ENCODE measurements at regions of chr1 and their contacts with region 1.

Region 1: DNA sequence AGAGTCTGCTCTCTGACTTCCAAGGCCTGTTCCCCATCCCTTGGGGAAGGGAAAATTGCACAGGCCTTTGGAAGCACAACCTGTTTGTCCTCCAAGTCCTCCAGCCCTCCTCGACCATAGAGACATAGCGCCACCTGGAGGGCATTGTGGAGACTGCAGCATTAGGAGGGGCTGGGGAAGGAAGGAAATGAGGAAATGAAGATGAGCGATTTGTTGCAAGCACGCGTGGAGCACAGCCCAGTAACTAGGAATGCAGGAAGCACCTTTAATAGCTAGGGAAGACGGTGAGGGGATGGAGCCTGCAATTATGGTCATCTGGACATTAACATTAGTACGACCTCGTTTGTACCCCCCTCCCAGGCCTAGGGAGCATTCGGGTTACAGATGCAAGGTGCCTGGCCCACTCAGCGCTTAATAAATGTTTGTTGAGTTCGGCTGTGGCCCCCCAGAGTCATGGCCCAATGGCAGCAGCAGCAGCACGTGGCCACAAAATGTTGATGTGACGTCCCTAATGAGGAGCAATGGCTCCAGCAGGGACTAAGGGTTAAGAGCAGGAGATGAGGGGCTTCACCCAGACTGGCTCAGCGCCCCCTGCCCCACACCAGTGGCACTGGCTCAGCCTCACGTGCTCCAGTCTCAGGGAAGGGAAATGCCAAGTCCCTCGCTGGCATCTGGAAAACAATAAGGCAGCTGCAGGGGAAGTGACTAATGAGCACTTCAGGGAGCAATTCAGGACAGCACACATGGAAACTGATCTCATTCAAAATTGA is 8.0 kb upstream of the CAMK2N1 start:
- DNase-seq: peak; percentile 77 to 91 (median 88)
- H3K4me3 ChIP-seq: no peak overlapping the region
- H3K27ac ChIP-seq: no peak overlapping the region
- H3K4me1 ChIP-seq: no peaks in the 10 kb centered on the region
- H3K27me3 ChIP-seq: no peaks in the 10 kb centered on the region
- CTCF ChIP-seq: peak; percentile 88 to 98 (median 97)
- EP300 ChIP-seq: no peak
- POLR2A ChIP-seq: no peak

Region 2: GRCh38 chr1:19918057-19918456 is 576.0 kb before region 1 on chr1:
- intact Hi-C with region 1: loop called (anchors 5 to 10 kb)
- DNase-seq: peak; percentile 84 to 95 (median 91)
- H3K4me3 ChIP-seq: no peak overlapping the region
- H3K27ac ChIP-seq: no peak overlapping the region
- H3K4me1 ChIP-seq: no peaks in the 10 kb centered on the region
- H3K27me3 ChIP-seq: no peaks in the 10 kb centered on the region
- CTCF ChIP-seq: peak; percentile 86 to 96 (median 95)
- EP300 ChIP-seq: no peak
- POLR2A ChIP-seq: no peak

Region 3: DNA sequence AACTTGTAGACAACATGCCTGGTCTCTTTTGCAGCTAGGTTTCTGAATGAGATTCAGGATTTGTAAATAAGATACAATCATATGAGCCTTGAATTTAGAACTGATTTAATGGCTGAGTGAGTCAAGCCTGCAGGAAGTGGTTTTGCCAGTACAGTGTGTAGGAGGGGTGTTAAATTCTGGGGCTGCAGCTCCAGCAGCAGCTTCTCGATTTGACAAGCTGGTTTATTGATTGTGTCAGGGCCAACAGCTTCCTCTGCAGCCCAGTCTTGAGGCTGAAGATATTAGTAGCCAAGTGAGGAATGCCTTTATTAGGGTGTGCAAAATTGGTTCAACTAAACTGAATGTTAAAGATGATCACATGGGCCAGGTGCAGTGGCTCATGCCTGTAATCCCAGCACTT is 435.5 kb before region 1 on chr1:
- intact Hi-C with region 1: no loop called
- DNase-seq: no peak
- H3K4me3 ChIP-seq: no peak overlapping the region
- H3K27ac ChIP-seq: no peak overlapping the region
- H3K4me1 ChIP-seq: peaks cover 7% of the 10 kb centered on the region
- H3K27me3 ChIP-seq: no peaks in the 10 kb centered on the region
- CTCF ChIP-seq: no peak
- EP300 ChIP-seq: no peak
- POLR2A ChIP-seq: no peak

Region 4: DNA sequence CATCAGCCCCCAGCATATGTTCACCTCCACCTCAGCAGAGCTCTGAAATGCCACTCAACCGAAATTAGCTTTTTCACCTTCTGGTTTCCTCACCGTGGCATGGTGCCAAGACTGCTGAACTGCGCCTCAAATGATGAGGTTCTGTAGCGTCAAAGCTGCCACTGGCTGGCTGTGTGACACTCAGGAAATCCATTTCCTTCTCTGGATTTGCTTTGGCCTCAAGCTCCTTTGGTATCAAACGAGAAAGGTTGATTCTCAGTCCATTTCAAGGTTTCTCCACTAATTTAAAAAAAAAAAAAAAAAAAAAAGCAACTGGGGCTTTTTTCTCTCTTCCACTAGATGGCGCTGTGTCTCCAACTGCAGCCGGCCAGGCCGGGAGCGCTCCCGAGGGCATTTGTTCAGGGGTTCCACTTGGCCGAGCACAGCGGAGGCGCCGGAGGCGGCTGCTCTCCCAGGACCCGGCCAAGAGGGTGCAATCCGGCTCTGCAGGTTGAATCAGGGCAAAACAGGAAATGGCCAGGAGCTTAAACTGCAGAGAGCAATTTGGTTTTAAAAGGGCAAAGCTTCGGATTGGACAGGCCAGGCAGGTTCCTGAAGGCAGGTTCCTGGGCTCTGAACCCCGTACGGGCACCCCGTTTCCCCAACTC is 281.2 kb before region 1 on chr1:
- intact Hi-C with region 1: loop called in 3 of 4 experiments (anchors 5 to 10 kb)
- DNase-seq: peak; percentile 57 to 76 (median 64)
- H3K4me3 ChIP-seq: no peak overlapping the region
- H3K27ac ChIP-seq: no peak overlapping the region
- H3K4me1 ChIP-seq: peaks cover 12% of the 10 kb centered on the region
- H3K27me3 ChIP-seq: no peaks in the 10 kb centered on the region
- CTCF ChIP-seq: peak; percentile 26 to 51 (median 31)
- EP300 ChIP-seq: no peak
- POLR2A ChIP-seq: no peak

Region 5: DNA sequence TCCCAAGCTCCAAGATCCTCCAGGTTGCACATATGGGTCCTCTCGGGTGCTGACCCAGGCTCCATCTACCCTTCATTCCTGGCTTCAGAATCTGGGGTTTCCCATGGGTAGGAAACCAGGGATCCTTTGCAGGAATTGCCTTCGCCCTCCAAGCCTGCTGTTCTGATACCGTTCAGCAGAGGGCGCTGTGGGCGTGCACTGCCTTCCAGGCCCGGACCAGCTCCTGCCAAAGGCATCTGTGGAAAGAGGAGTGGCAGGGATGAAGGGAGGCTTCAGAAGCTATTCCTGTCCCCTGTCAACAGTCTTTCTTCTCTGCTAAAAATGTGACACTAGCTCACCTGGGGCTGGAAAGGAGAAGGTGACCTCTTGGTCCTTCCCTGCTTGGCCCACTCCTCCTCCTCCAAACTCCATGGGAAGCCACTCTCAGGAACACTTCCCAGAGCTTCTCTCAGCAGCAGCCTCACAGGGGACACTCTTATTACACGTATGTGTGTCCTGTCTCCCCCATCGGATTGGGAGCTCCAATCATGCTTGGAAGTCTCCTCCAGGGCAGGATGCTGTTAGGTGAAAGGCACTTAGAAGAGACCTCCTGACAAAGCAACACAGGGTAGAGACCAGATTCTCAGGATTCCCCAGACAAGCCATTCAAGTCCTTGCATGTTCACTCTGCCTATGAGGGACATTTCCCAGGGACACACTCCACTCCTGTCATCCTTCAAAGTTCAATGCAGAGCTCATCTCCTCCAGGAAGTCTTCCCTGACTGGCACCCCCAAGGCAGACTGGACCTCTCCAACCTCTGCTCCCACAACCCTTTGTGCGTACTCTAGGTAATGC is 132.0 kb before region 1 on chr1:
- intact Hi-C with region 1: loop called in 3 of 4 experiments (anchors 5 kb)
- DNase-seq: peak; percentile 43 to 75 (median 69)
- H3K4me3 ChIP-seq: no peak overlapping the region
- H3K27ac ChIP-seq: no peak overlapping the region
- H3K4me1 ChIP-seq: peaks cover 7% of the 10 kb centered on the region
- H3K27me3 ChIP-seq: no peaks in the 10 kb centered on the region
- CTCF ChIP-seq: peak in 2 of 3 donors; percentile 57 to 62
- EP300 ChIP-seq: no peak
- POLR2A ChIP-seq: no peak

Region 6: DNA sequence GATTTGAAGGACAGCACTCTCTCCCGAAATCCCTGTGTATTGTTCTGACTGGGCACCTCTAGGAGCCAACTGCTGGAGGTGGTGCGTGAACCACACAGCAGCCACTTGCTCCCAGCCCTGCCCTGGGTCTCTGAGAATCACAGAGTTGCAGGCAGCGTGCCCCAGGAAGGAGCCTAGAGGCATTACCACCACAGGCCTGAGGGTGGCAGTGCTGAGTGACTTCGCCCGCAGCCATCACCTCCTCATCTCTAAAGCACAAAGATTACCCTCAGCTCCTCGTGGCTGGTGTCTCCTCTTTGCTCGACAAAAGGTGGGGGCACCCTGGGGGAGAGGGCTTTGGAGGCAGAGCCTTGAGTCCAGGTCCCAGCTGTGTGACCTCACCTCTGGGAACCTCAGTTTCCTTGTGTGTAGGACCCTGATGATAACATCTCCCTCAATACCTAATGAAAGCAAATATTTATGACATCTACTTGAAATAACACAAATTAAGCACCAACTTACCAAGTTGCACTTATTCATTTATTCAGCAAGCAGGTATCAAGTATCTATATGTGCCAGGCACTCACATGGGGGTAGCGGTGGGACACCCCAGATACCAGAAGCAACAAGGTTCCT is 117.0 kb before region 1 on chr1:
- intact Hi-C with region 1: loop called in 1 of 4 experiments (anchors 10 kb)
- DNase-seq: peak in 4 of 5 donors; percentile 34 to 61 (median 44)
- H3K4me3 ChIP-seq: no peak overlapping the region
- H3K27ac ChIP-seq: no peak overlapping the region
- H3K4me1 ChIP-seq: no peaks in the 10 kb centered on the region
- H3K27me3 ChIP-seq: no peaks in the 10 kb centered on the region
- CTCF ChIP-seq: peak; percentile 26 to 52 (median 36)
- EP300 ChIP-seq: no peak
- POLR2A ChIP-seq: no peak